ENCODE measurements at regions of chrX and their contacts with region 1.

Region 1: DNA sequence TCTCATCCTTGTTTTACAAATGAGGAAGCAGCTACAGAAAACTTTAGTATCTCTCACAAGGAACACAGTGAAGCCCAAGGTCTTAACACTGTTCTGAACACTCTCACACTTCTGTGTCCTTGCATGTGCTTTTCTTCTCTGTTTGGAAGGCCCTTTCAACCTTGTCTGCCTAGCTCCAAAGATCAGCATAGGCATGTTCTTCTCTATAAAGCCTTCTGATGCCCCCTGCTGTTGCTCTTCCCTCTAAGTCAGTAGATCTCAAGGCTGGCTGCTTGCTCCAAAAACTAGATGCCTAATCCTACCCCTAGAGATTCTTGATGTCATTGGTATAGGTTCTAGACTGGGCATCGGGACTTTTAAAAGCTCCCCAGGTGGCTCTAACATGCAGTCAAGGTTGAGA is 5.9 kb downstream of the APOO start:
- DNase-seq: peak; percentile 50 to 58
- H3K4me3 ChIP-seq: no peak overlapping the region; the same call in 1 of the 2 replicates
- H3K4me3 Mint-ChIP-seq: no peak overlapping the region
- H3K27ac Mint-ChIP-seq: no peak overlapping the region
- H3K4me1 ChIP-seq: peaks cover 18% of the 10 kb centered on the region
- H3K4me1 Mint-ChIP-seq: peaks cover 8% of the 10 kb centered on the region
- H3K27me3 ChIP-seq: no peaks in the 10 kb centered on the region
- H3K27me3 Mint-ChIP-seq: no peaks in the 10 kb centered on the region
- CTCF ChIP-seq: peak in 1 of 2 experiments; percentile 60

Region 2: DNA sequence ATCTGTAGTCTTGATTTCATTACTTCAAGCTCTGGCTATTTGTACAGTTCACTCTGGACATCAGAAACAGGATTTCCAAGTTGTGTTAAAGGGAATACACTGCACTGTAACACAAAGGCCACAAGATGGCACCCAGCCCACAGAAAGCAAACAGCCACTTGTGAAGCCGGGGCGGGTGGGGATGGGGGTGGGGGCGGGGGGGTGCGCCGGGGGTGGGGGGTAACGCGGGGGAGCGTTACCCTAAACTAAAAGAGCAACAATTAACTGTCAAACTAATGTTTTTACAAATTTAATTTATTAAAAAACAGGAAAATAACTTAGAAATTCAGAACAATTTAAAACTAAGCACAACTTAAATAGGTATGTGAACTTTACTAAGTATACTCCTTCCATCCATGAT is 207.2 kb before region 1 on chrX:
- CTCF ChIA-PET with region 1: interaction called, 18 read pairs
- POLR2A ChIA-PET with region 1: interaction called, 4 read pairs
- intact Hi-C with region 1: loop called (anchors 1 kb)
- DNase-seq: peak; percentile 35 to 41
- H3K4me3 ChIP-seq: no peak overlapping the region
- H3K4me3 Mint-ChIP-seq: no peak overlapping the region
- H3K27ac Mint-ChIP-seq: no peak overlapping the region
- H3K4me1 ChIP-seq: no peaks in the 10 kb centered on the region
- H3K4me1 Mint-ChIP-seq: no peaks in the 10 kb centered on the region
- H3K27me3 ChIP-seq: no peaks in the 10 kb centered on the region
- H3K27me3 Mint-ChIP-seq: no peaks in the 10 kb centered on the region
- CTCF ChIP-seq: peak; percentile 45 to 54

Region 3: DNA sequence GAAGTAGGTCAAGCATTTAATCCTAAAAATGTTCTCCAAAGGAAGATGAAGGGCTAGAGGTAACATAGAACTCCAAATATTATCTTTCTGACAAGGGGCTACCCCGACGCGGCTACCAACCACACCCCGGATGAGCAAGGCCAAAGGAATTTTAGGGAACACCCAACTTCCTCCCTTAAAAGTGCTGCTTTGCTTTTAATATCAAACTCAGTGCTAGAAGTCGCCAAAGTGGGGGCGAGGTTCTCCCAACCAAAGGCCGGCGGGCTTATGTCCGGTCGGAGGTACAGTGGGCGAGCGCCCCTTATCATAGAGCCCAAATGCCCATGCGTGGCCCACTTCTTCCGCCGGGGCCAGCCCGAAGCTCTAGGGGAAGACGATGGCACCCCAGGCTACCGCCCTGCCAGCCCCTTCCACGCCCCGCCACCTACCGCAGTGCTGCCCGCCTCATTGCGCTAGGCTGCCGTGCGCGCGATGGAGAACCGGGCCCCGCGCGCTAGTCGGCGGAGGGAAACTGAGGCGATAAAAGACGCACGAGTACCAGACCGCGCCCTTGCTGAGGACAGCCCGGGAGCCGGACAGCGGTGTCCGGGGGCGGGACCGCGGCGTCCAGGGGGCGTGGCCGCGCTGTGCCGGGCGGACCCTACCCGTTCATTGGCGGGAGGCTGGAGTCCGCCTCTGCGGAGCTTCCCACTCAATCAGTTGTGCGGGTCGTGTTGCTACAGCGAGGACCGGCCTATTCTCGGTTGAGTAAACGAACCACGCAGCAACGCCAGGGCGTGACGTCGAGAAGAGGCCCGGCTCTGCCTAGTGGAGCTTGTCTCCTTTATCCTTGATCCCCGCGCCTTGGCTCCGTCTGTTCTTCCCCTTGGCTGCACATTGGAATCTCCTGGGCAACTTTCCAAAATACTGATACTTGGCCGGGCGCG is 158.8 kb before region 1 on chrX and contains the start of gene ACOT9:
- CTCF ChIA-PET with region 1: interaction called, 17 read pairs
- POLR2A ChIA-PET with region 1: interaction called, 6 read pairs
- intact Hi-C with region 1: no loop called
- DNase-seq: peak; percentile 90 to 94
- H3K4me3 ChIP-seq: peak within 1 kb of the TSS; percentile 89
- H3K4me3 Mint-ChIP-seq: peak within 1 kb of the TSS; percentile 80
- H3K27ac Mint-ChIP-seq: peak within 1 kb of the TSS; percentile 92
- H3K4me1 ChIP-seq: no peaks in the 10 kb centered on the region
- H3K4me1 Mint-ChIP-seq: peaks cover 6% of the 10 kb centered on the region
- H3K27me3 ChIP-seq: no peaks in the 10 kb centered on the region
- H3K27me3 Mint-ChIP-seq: no peaks in the 10 kb centered on the region
- CTCF ChIP-seq: no peak
- total RNA-seq, gene ACOT9: 35.1 and 40.9 TPM in 2 replicates

Region 4: DNA sequence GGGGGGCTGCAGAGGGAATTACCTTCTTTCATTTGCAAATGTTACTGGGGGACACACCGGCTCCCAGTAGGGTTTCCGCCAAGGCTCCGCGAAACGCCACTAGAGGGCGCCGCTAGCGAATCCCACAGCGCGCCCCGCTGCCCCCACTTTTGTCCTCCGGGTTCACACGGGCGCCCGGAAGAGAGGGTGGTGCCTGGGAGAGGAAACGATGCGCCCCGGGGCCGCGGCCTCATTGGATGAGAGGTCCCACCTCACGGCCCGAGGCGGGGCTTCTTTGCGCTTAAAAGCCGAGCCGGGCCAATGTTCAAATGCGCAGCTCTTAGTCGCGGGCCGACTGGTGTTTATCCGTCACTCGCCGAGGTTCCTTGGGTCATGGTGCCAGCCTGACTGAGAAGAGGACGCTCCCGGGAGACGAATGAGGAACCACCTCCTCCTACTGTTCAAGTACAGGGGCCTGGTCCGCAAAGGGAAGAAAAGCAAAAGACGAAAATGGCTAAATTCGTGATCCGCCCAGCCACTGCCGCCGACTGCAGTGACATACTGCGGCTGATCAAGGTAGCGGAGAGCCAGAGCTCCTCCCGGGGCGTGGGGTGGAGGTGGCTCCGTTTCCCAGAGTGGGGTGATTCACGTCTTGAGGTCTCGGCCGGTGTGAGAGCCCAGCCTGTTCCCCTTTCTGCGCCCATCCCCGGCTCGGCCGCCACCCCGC is 118.8 kb before region 1 on chrX and contains the start of gene SAT1:
- CTCF ChIA-PET with region 1: interaction called, 53 read pairs
- POLR2A ChIA-PET with region 1: interaction called, 31 read pairs
- intact Hi-C with region 1: loop called (anchors 1 kb)
- DNase-seq: peak; percentile 94 to 95
- H3K4me3 ChIP-seq: peak within 1 kb of the TSS; percentile 80
- H3K4me3 Mint-ChIP-seq: peak within 1 kb of the TSS; percentile 92
- H3K27ac Mint-ChIP-seq: peak within 1 kb of the TSS; percentile 83
- H3K4me1 ChIP-seq: peaks cover 4% of the 10 kb centered on the region; the same call in 1 of the 2 replicates
- H3K4me1 Mint-ChIP-seq: no peaks in the 10 kb centered on the region
- H3K27me3 ChIP-seq: no peaks in the 10 kb centered on the region
- H3K27me3 Mint-ChIP-seq: no peaks in the 10 kb centered on the region
- CTCF ChIP-seq: peak; percentile 69 to 76
- total RNA-seq, gene SAT1: 151 and 155 TPM in 2 replicates

Region 5: GRCh38 chrX:23803931-23804381 is 97.8 kb before region 1 on chrX:
- CTCF ChIA-PET with region 1: interaction called, 11 read pairs
- POLR2A ChIA-PET with region 1: interaction called, 3 read pairs
- intact Hi-C with region 1: no loop called
- DNase-seq: peak; percentile 47 to 48
- H3K4me3 ChIP-seq: no peak overlapping the region
- H3K4me3 Mint-ChIP-seq: peak overlapping the region; percentile 38
- H3K27ac Mint-ChIP-seq: peak overlapping the region; percentile 90
- H3K4me1 ChIP-seq: peaks cover 27% of the 10 kb centered on the region
- H3K4me1 Mint-ChIP-seq: peaks cover 28% of the 10 kb centered on the region
- H3K27me3 ChIP-seq: no peaks in the 10 kb centered on the region
- H3K27me3 Mint-ChIP-seq: no peaks in the 10 kb centered on the region
- CTCF ChIP-seq: no peak

Region 6: DNA sequence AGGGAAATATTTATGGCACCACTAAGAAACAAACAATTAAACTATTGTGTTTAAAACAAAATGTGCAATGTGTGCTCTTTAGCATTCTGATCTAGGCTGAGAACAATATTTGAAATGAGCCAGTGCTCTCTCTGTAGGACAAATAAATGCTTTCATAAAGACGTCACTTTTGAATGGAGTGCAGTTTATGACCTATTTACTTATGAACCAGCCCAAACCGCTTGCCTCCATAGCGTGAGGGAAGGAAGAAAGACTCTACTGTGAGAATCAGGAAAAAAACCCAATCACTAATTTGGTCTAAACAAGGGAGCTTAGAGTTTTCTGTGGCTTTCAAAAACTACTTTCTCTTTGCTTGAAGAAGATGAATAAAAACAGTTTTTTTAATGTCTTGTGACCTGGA is 79.4 kb before region 1 on chrX:
- CTCF ChIA-PET with region 1: interaction called, 3 read pairs
- POLR2A ChIA-PET with region 1: no interaction called
- intact Hi-C with region 1: loop called (anchors 2 kb)
- DNase-seq: peak in 1 of 2 experiments; percentile 36
- H3K4me3 ChIP-seq: no peak overlapping the region
- H3K4me3 Mint-ChIP-seq: peak overlapping the region; percentile 16
- H3K27ac Mint-ChIP-seq: peak overlapping the region; percentile 75
- H3K4me1 ChIP-seq: peaks cover 16% of the 10 kb centered on the region
- H3K4me1 Mint-ChIP-seq: peaks cover 16% of the 10 kb centered on the region
- H3K27me3 ChIP-seq: no peaks in the 10 kb centered on the region
- H3K27me3 Mint-ChIP-seq: no peaks in the 10 kb centered on the region
- CTCF ChIP-seq: no peak

Region 7: GRCh38 chrX:23871905-23872546 is 29.8 kb before region 1 on chrX:
- CTCF ChIA-PET with region 1: no interaction called
- POLR2A ChIA-PET with region 1: no interaction called
- intact Hi-C with region 1: loop called (anchors 1 kb)
- DNase-seq: peak in 1 of 2 experiments; percentile 7
- H3K4me3 ChIP-seq: no peak overlapping the region
- H3K4me3 Mint-ChIP-seq: no peak overlapping the region
- H3K27ac Mint-ChIP-seq: no peak overlapping the region
- H3K4me1 ChIP-seq: no peaks in the 10 kb centered on the region
- H3K4me1 Mint-ChIP-seq: peaks cover 10% of the 10 kb centered on the region
- H3K27me3 ChIP-seq: no peaks in the 10 kb centered on the region
- H3K27me3 Mint-ChIP-seq: no peaks in the 10 kb centered on the region
- CTCF ChIP-seq: peak in 1 of 2 experiments; percentile 38

Measured in Caco-2 (cell line).